GM12878 (cell line): ENCODE measurements at regions of chr4 and their contacts with region 1.

Region 1: GRCh38 chr4:76087007-76087769 is 12.7 kb downstream of the ART3 start:
- DNase-seq: no peak
- ATAC-seq: peak; percentile 70
- H3K4me3 ChIP-seq: no peak overlapping the region
- H3K27ac ChIP-seq: no peak overlapping the region
- H3K4me1 ChIP-seq: no peaks in the 10 kb centered on the region
- H3K27me3 ChIP-seq: peaks cover 0 to 3% of the 10 kb centered on the region in 2 experiments; a peak in 1 of 4 replicates
- CTCF ChIP-seq: peak; percentile 27 to 45 (median 34); a peak in 4 of 6 replicates
- EP300 ChIP-seq: no peak
- POLR2A ChIP-seq: no peak
- RAD21 ChIP-seq: peak; percentile 46

Region 2: GRCh38 chr4:75916091-75916661 is 171.0 kb before region 1 on chr4:
- CTCF ChIA-PET with region 1: interaction called, 4 read pairs
- POLR2A ChIA-PET with region 1: no interaction called
- RAD21 ChIA-PET with region 1: interaction called, 5 read pairs
- SMC1A ChIA-PET with region 1: interaction called, 3 read pairs
- in situ Hi-C with region 1: no loop called
- intact Hi-C with region 1: loop called (anchors 5 kb)
- DNase-seq: no peak
- ATAC-seq: peak; percentile 89
- H3K4me3 ChIP-seq: no peak overlapping the region
- H3K27ac ChIP-seq: no peak overlapping the region
- H3K4me1 ChIP-seq: no peaks in the 10 kb centered on the region
- H3K27me3 ChIP-seq: no peaks in the 10 kb centered on the region
- CTCF ChIP-seq: peak; percentile 73 to 91 (median 76)
- EP300 ChIP-seq: no peak
- POLR2A ChIP-seq: no peak
- RAD21 ChIP-seq: peak; percentile 67

Region 3: GRCh38 chr4:75989846-75990528 is 97.2 kb before region 1 on chr4:
- CTCF ChIA-PET with region 1: interaction called, 43 read pairs
- POLR2A ChIA-PET with region 1: no interaction called
- RAD21 ChIA-PET with region 1: no interaction called
- SMC1A ChIA-PET with region 1: interaction called, 25 read pairs
- in situ Hi-C with region 1: no loop called
- intact Hi-C with region 1: no loop called
- DNase-seq: no peak
- ATAC-seq: peak; percentile 28
- H3K4me3 ChIP-seq: peak overlapping the region; percentile 88
- H3K27ac ChIP-seq: peak overlapping the region; percentile 72
- H3K4me1 ChIP-seq: no peaks in the 10 kb centered on the region; the same call in 1 of the 2 replicates
- H3K27me3 ChIP-seq: no peaks in the 10 kb centered on the region; a peak in 1 of 4 replicates
- CTCF ChIP-seq: no peak
- EP300 ChIP-seq: no peak
- POLR2A ChIP-seq: no peak
- RAD21 ChIP-seq: no peak

Region 4: GRCh38 chr4:76174216-76174615 is 87.0 kb after region 1 on chr4:
- CTCF ChIA-PET with region 1: no interaction called
- POLR2A ChIA-PET with region 1: no interaction called
- RAD21 ChIA-PET with region 1: no interaction called
- SMC1A ChIA-PET with region 1: no interaction called
- in situ Hi-C with region 1: no loop called
- intact Hi-C with region 1: no loop called
- DNase-seq: no peak
- ATAC-seq: no peak
- H3K4me3 ChIP-seq: no peak overlapping the region
- H3K27ac ChIP-seq: no peak overlapping the region
- H3K4me1 ChIP-seq: no peaks in the 10 kb centered on the region
- H3K27me3 ChIP-seq: no peaks in the 10 kb centered on the region
- CTCF ChIP-seq: no peak
- EP300 ChIP-seq: no peak
- POLR2A ChIP-seq: no peak
- RAD21 ChIP-seq: no peak